ENCODE measurements at regions of chr4 and their contacts with region 1.

Region 1: GRCh38 chr4:36824682-36825081 is 419.9 kb upstream of the NWD2 start:
- DNase-seq: no peak
- ATAC-seq: no peak
- H3K4me3 Mint-ChIP-seq: no peak overlapping the region
- H3K27ac Mint-ChIP-seq: no peak overlapping the region
- H3K4me1 Mint-ChIP-seq: no peaks in the 10 kb centered on the region
- H3K27me3 Mint-ChIP-seq: peaks cover 1% of the 10 kb centered on the region

Region 2: GRCh38 chr4:36844448-36844847 is 19.8 kb after region 1 on chr4:
- CTCF ChIA-PET with region 1: no interaction called
- POLR2A ChIA-PET with region 1: no interaction called
- intact Hi-C with region 1: loop called in 1 of 2 experiments (anchors 2 kb)
- DNase-seq: no peak
- ATAC-seq: no peak
- H3K4me3 Mint-ChIP-seq: no peak overlapping the region
- H3K27ac Mint-ChIP-seq: no peak overlapping the region
- H3K4me1 Mint-ChIP-seq: peaks cover 4% of the 10 kb centered on the region
- H3K27me3 Mint-ChIP-seq: no peaks in the 10 kb centered on the region

Measured in activated CD4-positive, alpha-beta T cell treated with anti-CD3 and anti-CD28 coated beads for 36 hours (primary cell).